CD8-positive, alpha-beta memory T cell (primary cell): ENCODE measurements at regions of chr17 and their contacts with region 1.

Region 1: GRCh38 chr17:4023220-4023619 is 59.0 kb upstream of the ATP2A3 start:
- DNase-seq: no peak
- H3K4me3 ChIP-seq: no peak overlapping the region
- H3K4me3 Mint-ChIP-seq: no peak overlapping the region
- H3K27ac ChIP-seq: no peak overlapping the region
- H3K27ac Mint-ChIP-seq: peak overlapping the region in 2 of 8 donors; percentile 29 to 71
- H3K4me1 ChIP-seq: no peaks in the 10 kb centered on the region
- H3K4me1 Mint-ChIP-seq: no peaks in the 10 kb centered on the region
- H3K27me3 ChIP-seq: no peaks in the 10 kb centered on the region
- H3K27me3 Mint-ChIP-seq: no peaks in the 10 kb centered on the region

Region 2: GRCh38 chr17:3602499-3602898 is 420.7 kb before region 1 on chr17:
- CTCF ChIA-PET with region 1: no interaction called
- POLR2A ChIA-PET with region 1: no interaction called
- DNase-seq: no peak
- H3K4me3 ChIP-seq: no peak overlapping the region
- H3K4me3 Mint-ChIP-seq: no peak overlapping the region
- H3K27ac ChIP-seq: no peak overlapping the region
- H3K27ac Mint-ChIP-seq: peak overlapping the region in 1 of 8 donors; percentile 29
- H3K4me1 ChIP-seq: no peaks in the 10 kb centered on the region
- H3K4me1 Mint-ChIP-seq: no peaks in the 10 kb centered on the region
- H3K27me3 ChIP-seq: no peaks in the 10 kb centered on the region
- H3K27me3 Mint-ChIP-seq: no peaks in the 10 kb centered on the region

Region 3: DNA sequence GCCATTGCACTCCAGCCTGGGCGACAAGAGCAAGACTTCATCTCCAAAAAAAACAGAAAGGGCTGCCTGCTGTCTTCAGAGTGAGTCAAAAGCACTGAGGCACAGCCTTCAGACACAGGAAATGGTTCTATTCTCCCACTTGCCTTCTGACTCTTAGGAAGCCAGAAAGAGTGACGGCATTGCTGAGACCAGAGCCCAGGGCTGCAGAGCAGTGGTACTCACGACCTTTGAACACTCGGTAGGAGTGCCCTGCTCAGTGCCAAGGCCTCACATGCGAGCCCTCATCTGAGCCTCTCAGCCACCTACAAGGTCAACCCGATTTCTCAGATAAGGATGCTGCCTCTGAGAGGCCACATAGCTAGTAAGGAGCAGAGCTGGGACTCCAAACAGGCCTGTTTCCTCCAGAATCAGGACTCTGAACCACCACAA is 218.7 kb before region 1 on chr17:
- CTCF ChIA-PET with region 1: no interaction called
- POLR2A ChIA-PET with region 1: interaction called, 13 read pairs
- DNase-seq: no peak
- H3K4me3 ChIP-seq: no peak overlapping the region
- H3K4me3 Mint-ChIP-seq: no peak overlapping the region
- H3K27ac ChIP-seq: no peak overlapping the region
- H3K27ac Mint-ChIP-seq: peak overlapping the region in 3 of 8 donors; percentile 23 to 81 (median 59)
- H3K4me1 ChIP-seq: no peaks in the 10 kb centered on the region
- H3K4me1 Mint-ChIP-seq: peaks cover 10 to 40% (median 13%) of the 10 kb centered on the region in 3 donors
- H3K27me3 ChIP-seq: no peaks in the 10 kb centered on the region
- H3K27me3 Mint-ChIP-seq: no peaks in the 10 kb centered on the region

Region 4: GRCh38 chr17:3959295-3959925 is 63.8 kb before region 1 on chr17:
- CTCF ChIA-PET with region 1: no interaction called
- POLR2A ChIA-PET with region 1: interaction called, 10 read pairs
- DNase-seq: no peak
- H3K4me3 ChIP-seq: no peak overlapping the region
- H3K4me3 Mint-ChIP-seq: peak overlapping the region in 4 of 7 donors; percentile 34 to 56 (median 44)
- H3K27ac ChIP-seq: peak overlapping the region; percentile 41
- H3K27ac Mint-ChIP-seq: peak overlapping the region; percentile 66 to 98 (median 86)
- H3K4me1 ChIP-seq: peaks cover 60% of the 10 kb centered on the region
- H3K4me1 Mint-ChIP-seq: peaks cover 65 to 75% (median 69%) of the 10 kb centered on the region in 3 donors
- H3K27me3 ChIP-seq: no peaks in the 10 kb centered on the region
- H3K27me3 Mint-ChIP-seq: no peaks in the 10 kb centered on the region